ENCODE measurements at regions of chr5 and their contacts with region 1.

Region 1: GRCh38 chr5:173625696-173626504 is 9.4 kb upstream of the BOD1 start:
- ATAC-seq: peak; percentile 28 to 93 (median 70)
- H3K4me3 ChIP-seq: no peak overlapping the region
- H3K27ac ChIP-seq: no peak overlapping the region
- H3K4me1 ChIP-seq: peaks cover 30 to 32% of the 10 kb centered on the region in 2 donors

Region 2: GRCh38 chr5:173972925-173973615 is 347.2 kb after region 1 on chr5:
- in situ Hi-C with region 1: loop called in 8 of 9 experiments (anchors 5 to 25 kb)
- ATAC-seq: peak; percentile 65 to 92 (median 74)
- H3K4me3 ChIP-seq: peak overlapping the region in 2 of 5 donors; percentile 12 to 14
- H3K27ac ChIP-seq: no peak overlapping the region
- H3K4me1 ChIP-seq: peaks cover 22 to 39% of the 10 kb centered on the region in 2 donors

Measured in motor neuron (in vitro differentiated cells).